ENCODE measurements at regions of chrX and their contacts with region 1.

Region 1: GRCh38 chrX:71532753-71533425 is at the start of gene OGT:
- DNase-seq: peak; percentile 91
- H3K4me3 Mint-ChIP-seq: peak within 1 kb of the TSS; percentile 100
- H3K27ac Mint-ChIP-seq: peak within 1 kb of the TSS; percentile 93
- H3K4me1 Mint-ChIP-seq: no peaks in the 10 kb centered on the region
- H3K27me3 Mint-ChIP-seq: no peaks in the 10 kb centered on the region
- CTCF ChIP-seq: no peak
- total RNA-seq, gene OGT: 282 and 300 TPM in 2 replicates

Region 2: DNA sequence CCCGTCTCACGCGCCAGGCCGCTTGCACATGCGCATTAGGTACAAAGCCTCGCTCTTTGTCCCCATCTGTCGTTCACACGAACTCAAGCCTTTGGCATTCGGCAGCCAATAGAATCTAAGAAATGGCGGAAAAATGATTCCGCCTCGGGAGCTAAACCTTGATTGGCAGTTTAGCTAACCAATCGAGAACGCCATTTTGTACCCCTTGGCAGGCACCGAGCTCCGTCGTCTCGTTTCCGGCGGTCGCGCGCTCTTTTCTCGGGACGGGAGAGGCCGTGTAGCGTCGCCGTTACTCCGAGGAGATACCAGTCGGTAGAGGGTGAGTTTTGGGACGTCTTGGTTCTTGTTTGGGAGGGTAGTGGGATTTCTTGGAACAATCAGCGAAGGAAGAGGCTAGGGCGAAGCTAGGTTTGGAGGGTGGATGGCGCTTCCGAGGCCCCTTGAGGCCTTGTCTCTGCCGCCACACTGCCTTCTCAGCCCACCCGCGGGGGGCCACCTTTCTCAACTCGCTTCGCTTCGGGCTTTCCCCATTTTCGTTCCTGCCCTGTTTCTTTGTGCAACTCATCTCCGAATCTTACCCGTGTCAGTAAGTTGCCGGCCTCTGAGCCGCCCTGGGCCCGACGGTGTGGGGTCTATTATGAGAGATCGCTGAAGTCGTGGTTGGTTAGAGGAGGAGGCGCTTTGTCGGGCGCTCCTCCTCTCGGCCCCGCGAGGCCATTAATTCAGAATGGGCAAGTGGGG is 249.3 kb before region 1 on chrX and contains the start of gene NONO:
- CTCF ChIA-PET with region 1: no interaction called
- POLR2A ChIA-PET with region 1: interaction called, 11 read pairs
- intact Hi-C with region 1: no loop called
- DNase-seq: peak; percentile 97
- H3K4me3 Mint-ChIP-seq: peak within 1 kb of the TSS; percentile 96
- H3K27ac Mint-ChIP-seq: peak within 1 kb of the TSS; percentile 98
- H3K4me1 Mint-ChIP-seq: no peaks in the 10 kb centered on the region
- H3K27me3 Mint-ChIP-seq: peaks cover 10% of the 10 kb centered on the region
- CTCF ChIP-seq: no peak
- total RNA-seq, gene NONO: 255 and 292 TPM in 2 replicates

Region 3: GRCh38 chrX:71365876-71366673 is 166.8 kb before region 1 on chrX and contains the start of gene TAF1:
- CTCF ChIA-PET with region 1: no interaction called
- POLR2A ChIA-PET with region 1: interaction called, 39 read pairs
- intact Hi-C with region 1: no loop called
- DNase-seq: peak; percentile 95
- H3K4me3 Mint-ChIP-seq: peak within 1 kb of the TSS; percentile 96
- H3K27ac Mint-ChIP-seq: peak within 1 kb of the TSS; percentile 97
- H3K4me1 Mint-ChIP-seq: peaks cover 5% of the 10 kb centered on the region
- H3K27me3 Mint-ChIP-seq: peaks cover 4% of the 10 kb centered on the region
- CTCF ChIP-seq: no peak
- total RNA-seq, gene TAF1: 31.9 and 34.9 TPM in 2 replicates

Region 4: GRCh38 chrX:71492231-71493065 is 40.4 kb before region 1 on chrX:
- CTCF ChIA-PET with region 1: no interaction called
- POLR2A ChIA-PET with region 1: interaction called, 16 read pairs
- intact Hi-C with region 1: no loop called
- DNase-seq: peak; percentile 3
- H3K4me3 Mint-ChIP-seq: peak overlapping the region; percentile 56
- H3K27ac Mint-ChIP-seq: no peak overlapping the region
- H3K4me1 Mint-ChIP-seq: no peaks in the 10 kb centered on the region
- H3K27me3 Mint-ChIP-seq: peaks cover 30% of the 10 kb centered on the region
- CTCF ChIP-seq: no peak

Region 5: GRCh38 chrX:71514367-71515038 is 18.4 kb before region 1 on chrX:
- CTCF ChIA-PET with region 1: no interaction called
- POLR2A ChIA-PET with region 1: interaction called, 11 read pairs
- intact Hi-C with region 1: no loop called
- DNase-seq: no peak
- H3K4me3 Mint-ChIP-seq: no peak overlapping the region
- H3K27ac Mint-ChIP-seq: no peak overlapping the region
- H3K4me1 Mint-ChIP-seq: peaks cover 6% of the 10 kb centered on the region
- H3K27me3 Mint-ChIP-seq: peaks cover 22% of the 10 kb centered on the region
- CTCF ChIP-seq: no peak

Region 6: DNA sequence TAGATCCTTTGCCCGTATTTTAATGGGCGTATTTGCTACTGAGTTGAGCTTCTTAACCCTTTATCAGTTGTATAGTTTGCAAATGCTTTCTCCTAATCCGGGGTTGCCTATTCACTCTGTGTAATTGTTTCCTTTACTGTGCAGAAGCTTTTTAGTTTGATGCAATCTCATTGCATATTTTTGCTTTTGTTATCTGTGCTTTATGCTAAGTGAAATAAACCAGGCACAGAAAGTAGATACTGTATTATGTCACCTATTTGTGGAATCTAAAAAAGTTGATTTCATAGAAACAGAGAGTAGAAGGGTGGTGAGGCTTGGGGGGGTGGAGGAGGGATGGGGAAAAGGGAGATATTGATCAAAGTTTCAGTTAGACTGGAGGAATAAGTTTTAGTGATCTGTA is 17.7 kb after region 1 on chrX:
- CTCF ChIA-PET with region 1: interaction called, 8 read pairs
- POLR2A ChIA-PET with region 1: interaction called, 171 read pairs
- intact Hi-C with region 1: no loop called
- DNase-seq: no peak
- H3K4me3 Mint-ChIP-seq: no peak overlapping the region
- H3K27ac Mint-ChIP-seq: no peak overlapping the region
- H3K4me1 Mint-ChIP-seq: no peaks in the 10 kb centered on the region
- H3K27me3 Mint-ChIP-seq: no peaks in the 10 kb centered on the region
- CTCF ChIP-seq: no peak

Measured in MCF 10A (cell line).